ENCODE measurements at regions of chr6 and their contacts with region 1.

Region 1: DNA sequence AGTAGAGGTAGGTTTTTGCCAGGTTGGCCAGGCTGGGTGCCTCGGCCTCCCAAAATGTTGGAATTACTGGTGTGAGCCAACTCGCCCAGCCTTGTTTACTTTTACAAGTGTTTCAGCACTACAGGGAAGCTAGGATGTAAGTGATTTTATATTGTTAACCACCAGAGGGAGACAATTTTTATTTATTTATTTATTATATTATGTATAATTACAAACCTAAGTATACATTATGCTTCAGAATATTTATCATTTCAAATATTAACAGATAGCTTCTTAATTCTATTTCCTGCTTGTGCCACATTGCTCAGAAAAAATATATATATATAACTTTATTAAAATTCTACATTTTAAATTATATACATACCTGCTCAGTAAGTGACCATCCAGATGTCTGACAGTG is 9.8 kb downstream of the MMUT start:
- DNase-seq: peak in 1 of 4 experiments; percentile 7
- ATAC-seq: peak; percentile 72
- H3K4me3 ChIP-seq: no peak overlapping the region
- H3K27ac ChIP-seq: no peak overlapping the region
- H3K4me1 ChIP-seq: no peaks in the 10 kb centered on the region
- H3K27me3 ChIP-seq: no peaks in the 10 kb centered on the region
- CTCF ChIP-seq: peak in 2 of 3 experiments; percentile 31 to 35; a peak in 4 of 6 replicates
- EP300 ChIP-seq: no peak
- POLR2A ChIP-seq: no peak
- RAD21 ChIP-seq: 0 out of 4 replicates have a peak, but pooled peaks of 1 of the 2 experiments have one; percentile 7

Region 2: GRCh38 chr6:49856282-49856681 is 403.1 kb after region 1 on chr6:
- CTCF ChIA-PET with region 1: no interaction called
- POLR2A ChIA-PET with region 1: no interaction called
- in situ Hi-C with region 1: no loop called
- intact Hi-C with region 1: loop called (anchors 5 kb)
- DNase-seq: no peak
- ATAC-seq: no peak
- H3K4me3 ChIP-seq: no peak overlapping the region
- H3K27ac ChIP-seq: no peak overlapping the region
- H3K4me1 ChIP-seq: peaks cover 0 to 7% of the 10 kb centered on the region in 2 experiments; a peak in 1 of 5 replicates
- H3K27me3 ChIP-seq: no peaks in the 10 kb centered on the region
- CTCF ChIP-seq: no peak
- EP300 ChIP-seq: no peak
- POLR2A ChIP-seq: no peak
- RAD21 ChIP-seq: no peak